Pancreas (tissue), 10 donors: ENCODE measurements at regions of chr10 and their contacts with region 1.

Region 1: GRCh38 chr10:60964257-60965235 is 20.6 kb upstream of the RHOBTB1 start:
- DNase-seq: peak; percentile 30 to 72 (median 59)
- ATAC-seq: peak; percentile 88 to 97 (median 96)
- H3K4me3 ChIP-seq: no peak overlapping the region
- H3K27ac ChIP-seq: peak overlapping the region in 2 of 4 donors; percentile 65 to 81
- H3K4me1 ChIP-seq: peaks cover 0 to 33% (median 13%) of the 10 kb centered on the region in 3 donors
- H3K27me3 ChIP-seq: no peaks in the 10 kb centered on the region
- CTCF ChIP-seq: peak; percentile 24 to 80 (median 64)

Region 2: DNA sequence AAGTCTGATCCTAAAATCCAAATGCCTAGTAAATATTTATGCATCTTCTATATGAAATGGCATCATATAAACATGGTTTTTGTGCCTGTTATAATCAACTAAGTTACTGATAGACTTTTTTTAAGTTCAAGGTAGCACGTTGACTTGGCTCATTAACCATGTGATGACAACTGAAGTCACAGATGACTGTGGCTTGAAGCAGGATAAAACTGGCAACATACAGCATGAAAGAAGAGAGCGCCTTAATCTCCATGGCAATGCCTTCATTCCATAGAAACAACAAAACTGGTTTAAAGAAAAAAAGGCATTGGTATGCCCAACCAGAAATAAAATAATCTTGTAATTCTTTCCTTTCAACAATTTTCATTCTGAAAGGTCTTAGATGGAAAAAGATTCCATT is 375.2 kb before region 1 on chr10:
- intact Hi-C with region 1: no loop called
- DNase-seq: no peak
- ATAC-seq: no peak
- H3K4me3 ChIP-seq: no peak overlapping the region
- H3K27ac ChIP-seq: no peak overlapping the region
- H3K4me1 ChIP-seq: no peaks in the 10 kb centered on the region
- H3K27me3 ChIP-seq: no peaks in the 10 kb centered on the region
- CTCF ChIP-seq: no peak

Region 3: GRCh38 chr10:60834401-60834800 is 130.1 kb before region 1 on chr10:
- intact Hi-C with region 1: loop called in 1 of 3 experiments (anchors 10 kb)
- DNase-seq: no peak
- ATAC-seq: no peak
- H3K4me3 ChIP-seq: no peak overlapping the region
- H3K27ac ChIP-seq: no peak overlapping the region
- H3K4me1 ChIP-seq: no peaks in the 10 kb centered on the region
- H3K27me3 ChIP-seq: no peaks in the 10 kb centered on the region
- CTCF ChIP-seq: no peak

Region 4: GRCh38 chr10:60883187-60883586 is 81.4 kb before region 1 on chr10:
- intact Hi-C with region 1: loop called in 1 of 3 experiments (anchors 10 kb)
- DNase-seq: peak in 3 of 6 donors; percentile 17 to 46 (median 21)
- ATAC-seq: peak; percentile 80 to 92 (median 89)
- H3K4me3 ChIP-seq: no peak overlapping the region
- H3K27ac ChIP-seq: no peak overlapping the region
- H3K4me1 ChIP-seq: no peaks in the 10 kb centered on the region
- H3K27me3 ChIP-seq: no peaks in the 10 kb centered on the region
- CTCF ChIP-seq: peak; percentile 7 to 26 (median 14)

Region 5: GRCh38 chr10:61100887-61101286 is 136.3 kb after region 1 on chr10:
- intact Hi-C with region 1: no loop called
- DNase-seq: no peak
- ATAC-seq: peak in 1 of 4 donors; percentile 38
- H3K4me3 ChIP-seq: no peak overlapping the region
- H3K27ac ChIP-seq: no peak overlapping the region
- H3K4me1 ChIP-seq: no peaks in the 10 kb centered on the region
- H3K27me3 ChIP-seq: no peaks in the 10 kb centered on the region
- CTCF ChIP-seq: no peak